Uterus (tissue), 4 donors: ENCODE measurements at regions of chr3 and their contacts with region 1.

Region 1: GRCh38 chr3:115692887-115693524 is 69.7 kb downstream of the GAP43 start:
- DNase-seq: peak; percentile 63 to 65
- H3K4me3 ChIP-seq: no peak overlapping the region
- H3K27ac ChIP-seq: no peak overlapping the region
- H3K4me1 ChIP-seq: no peaks in the 10 kb centered on the region
- H3K27me3 ChIP-seq: no peaks in the 10 kb centered on the region
- CTCF ChIP-seq: peak; percentile 75 to 81 (median 78)
- POLR2A ChIP-seq: no peak

Region 2: GRCh38 chr3:115217678-115218451 is 475.1 kb before region 1 on chr3:
- intact Hi-C with region 1: loop called (anchors 5 kb)
- DNase-seq: peak; percentile 17
- H3K4me3 ChIP-seq: no peak overlapping the region
- H3K27ac ChIP-seq: no peak overlapping the region
- H3K4me1 ChIP-seq: no peaks in the 10 kb centered on the region
- H3K27me3 ChIP-seq: no peaks in the 10 kb centered on the region
- CTCF ChIP-seq: peak; percentile 54 to 74 (median 68)
- POLR2A ChIP-seq: no peak

Region 3: DNA sequence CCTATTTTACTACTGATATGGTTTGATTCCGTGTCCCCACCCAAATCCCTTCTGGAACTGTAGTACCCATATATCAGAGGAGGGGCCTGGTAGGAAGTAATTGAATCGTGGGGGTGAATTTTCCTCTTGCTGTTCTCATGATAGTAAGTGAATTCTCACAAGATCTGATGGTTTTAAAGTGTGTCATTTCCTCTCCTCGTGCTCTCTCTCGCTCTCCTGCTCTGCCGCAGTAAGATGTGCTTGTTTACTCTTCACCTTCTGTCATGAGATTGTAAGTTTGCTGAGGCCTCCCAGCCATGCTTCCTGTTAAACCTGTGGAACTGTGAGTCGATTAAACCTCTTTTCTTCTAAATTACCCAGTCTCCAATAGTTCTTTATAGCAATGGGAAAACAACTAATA is 464.7 kb before region 1 on chr3:
- intact Hi-C with region 1: no loop called
- DNase-seq: no peak
- H3K4me3 ChIP-seq: no peak overlapping the region
- H3K27ac ChIP-seq: no peak overlapping the region
- H3K4me1 ChIP-seq: no peaks in the 10 kb centered on the region
- H3K27me3 ChIP-seq: no peaks in the 10 kb centered on the region
- CTCF ChIP-seq: no peak
- POLR2A ChIP-seq: no peak

Region 4: DNA sequence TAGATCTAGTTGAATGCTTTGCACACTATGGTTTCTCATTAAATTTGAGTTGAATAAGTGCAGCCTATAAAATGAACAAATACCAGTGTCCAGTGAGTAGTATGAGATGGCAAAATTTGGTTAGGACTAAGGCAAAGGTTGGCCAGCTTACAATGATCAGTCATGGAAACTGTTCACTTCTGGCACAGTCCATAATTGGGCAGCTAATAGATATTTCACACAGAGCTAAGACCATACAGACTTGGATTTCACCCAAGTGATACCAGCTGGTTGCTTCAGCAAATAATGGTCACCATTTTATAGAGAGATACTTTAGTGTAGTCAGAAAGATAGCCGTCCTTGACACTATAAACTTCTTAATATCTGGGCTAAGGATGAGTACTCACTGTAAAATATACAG is 54.0 kb before region 1 on chr3:
- intact Hi-C with region 1: no loop called
- DNase-seq: no peak
- H3K4me3 ChIP-seq: no peak overlapping the region
- H3K27ac ChIP-seq: no peak overlapping the region
- H3K4me1 ChIP-seq: no peaks in the 10 kb centered on the region
- H3K27me3 ChIP-seq: no peaks in the 10 kb centered on the region
- CTCF ChIP-seq: no peak
- POLR2A ChIP-seq: no peak